Endothelial cell of umbilical vein (primary cell): ENCODE measurements at regions of chr14 and their contacts with region 1.

Region 1: DNA sequence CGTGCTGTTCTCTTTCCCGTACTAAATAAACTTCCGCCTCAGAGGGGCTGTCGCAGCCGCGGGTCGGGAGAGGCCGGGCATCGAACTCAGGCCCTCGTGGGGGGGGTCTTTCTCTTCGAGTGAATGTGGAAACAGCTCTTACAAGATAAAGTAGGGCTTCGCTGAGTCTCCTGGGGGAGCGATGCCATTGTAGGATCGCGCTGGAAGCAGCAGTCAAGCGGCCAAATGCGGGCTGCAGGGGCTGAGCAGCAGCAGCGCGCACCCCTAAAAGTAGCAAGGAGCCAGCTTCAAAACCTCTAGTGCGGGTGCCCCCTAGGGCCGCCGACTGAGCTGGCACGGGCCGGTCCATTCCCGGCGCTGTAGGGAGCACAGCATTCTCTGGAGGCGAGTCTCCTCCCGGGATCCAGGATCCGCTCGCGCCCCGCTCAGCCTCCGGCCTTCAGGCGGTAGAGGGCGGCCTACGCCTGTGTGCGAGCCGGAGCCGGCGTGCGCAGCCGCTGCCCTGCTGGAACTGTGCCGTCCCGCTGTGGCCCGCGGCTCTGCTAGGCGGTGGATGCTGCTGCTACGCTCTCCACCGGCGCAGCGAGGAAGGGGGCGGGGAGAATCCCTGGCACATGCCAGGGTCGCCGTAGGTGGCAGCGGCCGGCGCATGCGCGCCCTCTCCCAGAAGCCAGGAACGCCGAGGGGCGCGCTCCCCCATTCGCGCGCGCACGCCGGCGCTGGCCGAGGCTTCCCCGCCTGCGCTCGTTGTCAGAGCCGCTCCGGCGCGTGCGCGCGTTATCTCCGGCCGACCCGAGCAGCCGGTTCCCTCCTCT is at the start of gene FUT8:
- DNase-seq: peak; percentile 98
- H3K4me3 ChIP-seq: peak within 1 kb of the TSS; percentile 76 to 96 (median 85)
- H3K27ac ChIP-seq: peak within 1 kb of the TSS; percentile 61
- H3K4me1 ChIP-seq: peaks cover 18% of the 10 kb centered on the region
- H3K27me3 ChIP-seq: no peaks in the 10 kb centered on the region
- CTCF ChIP-seq: peak; percentile 60 to 80
- POLR2A ChIP-seq: peak; percentile 86
- total RNA-seq, gene FUT8: 27.7 and 38.8 TPM in 2 replicates

Region 2: DNA sequence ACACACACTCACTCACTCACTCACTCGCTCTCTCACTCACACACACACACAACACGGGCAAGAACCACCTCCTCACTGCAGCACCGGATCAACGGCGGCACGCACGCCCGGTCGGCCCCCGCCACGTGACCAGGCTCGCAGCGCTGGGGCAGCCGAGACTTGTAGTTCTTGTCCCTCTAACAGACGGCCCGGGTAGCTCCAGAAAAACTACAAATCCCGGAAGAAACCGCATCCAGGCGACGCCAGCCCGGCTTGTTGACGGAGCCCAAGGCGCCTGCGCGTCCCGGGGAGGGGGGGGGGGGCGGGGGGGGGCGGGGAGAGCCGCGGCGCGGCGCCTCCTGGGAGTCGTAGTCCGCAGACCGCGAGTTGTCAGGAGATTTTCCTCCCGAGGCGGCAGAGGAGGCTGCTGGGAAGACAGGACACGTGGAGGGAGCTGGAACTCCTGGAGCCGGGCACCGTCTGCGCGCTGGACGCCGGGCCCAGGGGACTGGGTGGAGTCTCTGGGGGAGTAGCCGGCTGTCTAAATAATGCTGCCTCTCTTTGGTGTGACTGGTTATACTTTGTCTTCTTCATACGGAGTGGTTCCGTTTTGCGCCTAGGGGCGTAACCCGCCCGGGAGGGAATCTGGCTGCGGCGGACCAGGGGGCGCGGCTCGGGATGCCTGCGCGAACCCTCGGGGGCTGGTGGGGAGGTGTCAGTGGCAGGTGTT is 309.6 kb before region 1 on chr14 and contains the start of gene MAX:
- CTCF ChIA-PET with region 1: interaction called, 5 read pairs
- POLR2A ChIA-PET with region 1: no interaction called
- dilution Hi-C with region 1: no loop called
- intact Hi-C with region 1: loop called (anchors 1 kb)
- DNase-seq: peak; percentile 99
- H3K4me3 ChIP-seq: peak within 1 kb of the TSS; percentile 87 to 93 (median 91)
- H3K27ac ChIP-seq: peak within 1 kb of the TSS; percentile 74
- H3K4me1 ChIP-seq: peaks cover 35% of the 10 kb centered on the region
- H3K27me3 ChIP-seq: no peaks in the 10 kb centered on the region
- CTCF ChIP-seq: no peak
- POLR2A ChIP-seq: peak; percentile 65
- total RNA-seq, gene MAX: 79.5 and 84.6 TPM in 2 replicates

Region 3: DNA sequence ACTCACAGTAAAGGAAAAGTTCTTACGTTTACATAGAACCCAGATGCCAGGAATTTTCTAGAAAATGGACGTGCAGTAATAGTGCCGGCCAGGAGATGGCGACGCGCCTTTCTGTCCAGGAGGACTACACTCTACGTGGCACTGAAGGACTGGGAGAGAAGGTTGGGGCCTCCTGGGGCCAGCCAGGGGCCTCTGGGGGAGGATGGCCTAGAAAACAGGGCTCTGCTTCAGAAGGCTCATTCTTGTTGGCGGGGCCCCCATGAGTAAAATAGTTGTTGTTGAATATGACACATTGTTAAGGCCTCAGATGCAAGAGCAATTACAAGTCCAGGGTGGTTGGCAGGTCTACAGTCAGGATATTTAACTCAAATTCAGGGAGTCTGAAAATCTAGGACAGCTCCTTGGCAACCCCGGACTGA is 189.8 kb before region 1 on chr14:
- CTCF ChIA-PET with region 1: interaction called, 35 read pairs
- POLR2A ChIA-PET with region 1: no interaction called
- dilution Hi-C with region 1: no loop called
- intact Hi-C with region 1: loop called (anchors 1 kb)
- DNase-seq: peak; percentile 80
- H3K4me3 ChIP-seq: no peak overlapping the region
- H3K27ac ChIP-seq: no peak overlapping the region
- H3K4me1 ChIP-seq: peaks cover 4% of the 10 kb centered on the region
- H3K27me3 ChIP-seq: no peaks in the 10 kb centered on the region
- CTCF ChIP-seq: peak; percentile 82
- POLR2A ChIP-seq: no peak

Region 4: GRCh38 chr14:65449647-65450046 is 37.4 kb after region 1 on chr14:
- CTCF ChIA-PET with region 1: interaction called, 10 read pairs
- POLR2A ChIA-PET with region 1: no interaction called
- dilution Hi-C with region 1: no loop called
- intact Hi-C with region 1: no loop called
- DNase-seq: no peak
- H3K4me3 ChIP-seq: no peak overlapping the region
- H3K27ac ChIP-seq: no peak overlapping the region
- H3K4me1 ChIP-seq: peaks cover 8% of the 10 kb centered on the region
- H3K27me3 ChIP-seq: no peaks in the 10 kb centered on the region
- CTCF ChIP-seq: no peak
- POLR2A ChIP-seq: no peak

Region 5: DNA sequence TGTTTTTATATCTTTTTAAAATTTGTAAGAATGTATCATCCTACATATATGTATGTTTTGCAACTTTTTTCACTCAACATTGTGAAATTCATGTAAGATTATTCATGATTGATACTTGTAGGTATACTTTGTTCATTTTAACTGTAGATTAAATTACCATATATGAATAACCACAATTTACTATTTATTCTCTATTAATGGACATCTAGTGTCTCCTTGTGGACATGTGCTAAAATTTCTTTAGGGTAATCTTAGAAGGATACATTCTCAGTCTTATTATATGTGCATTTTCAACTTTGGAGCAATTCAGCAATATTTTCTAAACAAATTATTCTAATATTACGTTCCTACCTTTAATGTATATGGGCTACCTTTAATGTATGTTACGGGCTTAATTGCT is 192.7 kb after region 1 on chr14:
- CTCF ChIA-PET with region 1: interaction called, 21 read pairs
- POLR2A ChIA-PET with region 1: no interaction called
- dilution Hi-C with region 1: no loop called
- intact Hi-C with region 1: loop called (anchors 1 kb)
- DNase-seq: peak; percentile 15
- H3K4me3 ChIP-seq: no peak overlapping the region
- H3K27ac ChIP-seq: no peak overlapping the region
- H3K4me1 ChIP-seq: no peaks in the 10 kb centered on the region
- H3K27me3 ChIP-seq: no peaks in the 10 kb centered on the region
- CTCF ChIP-seq: no peak
- POLR2A ChIP-seq: no peak

Region 6: DNA sequence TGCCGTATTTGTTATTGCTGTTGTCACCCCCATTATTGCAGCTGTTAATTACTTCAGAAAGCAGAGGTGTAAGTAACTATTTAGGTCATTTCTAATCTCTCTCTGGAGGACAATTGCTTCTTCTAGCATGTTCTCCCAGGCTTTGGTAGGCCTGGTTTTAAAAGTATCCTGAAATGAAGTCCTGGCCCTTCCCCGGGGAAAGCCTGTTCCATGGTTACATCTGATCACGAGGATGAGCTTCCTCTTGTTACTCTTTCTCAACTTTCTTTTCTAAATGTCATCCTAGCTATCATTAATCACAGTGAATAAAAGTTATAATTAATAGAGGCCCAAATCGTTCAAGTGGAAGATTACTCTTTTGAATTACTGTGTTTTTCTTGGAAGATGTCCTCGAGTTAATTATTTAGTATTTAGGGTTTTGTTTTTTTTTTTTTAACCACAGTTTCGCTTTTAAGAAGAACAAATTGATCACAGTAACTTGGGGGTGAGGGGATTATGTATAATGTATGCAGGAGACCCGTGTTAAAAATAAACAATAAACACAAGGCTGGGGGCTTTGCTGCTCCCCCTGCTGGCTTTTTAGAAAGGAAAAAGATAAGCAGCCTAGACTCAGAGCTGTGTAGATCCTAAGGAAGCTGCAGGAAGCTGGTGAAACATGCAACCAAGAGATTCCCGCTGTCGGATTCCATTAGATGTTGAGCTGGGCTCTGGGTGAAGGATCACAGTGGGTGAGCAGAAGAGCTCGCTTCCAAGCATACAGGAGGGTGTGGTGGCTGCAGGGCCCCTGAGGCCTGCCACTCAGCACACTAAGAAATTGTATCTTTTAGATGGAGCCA is 420.4 kb after region 1 on chr14:
- CTCF ChIA-PET with region 1: interaction called, 926 read pairs
- POLR2A ChIA-PET with region 1: no interaction called
- dilution Hi-C with region 1: no loop called
- intact Hi-C with region 1: loop called (anchors 1 kb)
- DNase-seq: peak; percentile 27
- H3K4me3 ChIP-seq: no peak overlapping the region
- H3K27ac ChIP-seq: no peak overlapping the region
- H3K4me1 ChIP-seq: no peaks in the 10 kb centered on the region
- H3K27me3 ChIP-seq: peaks cover 0 to 5% of the 10 kb centered on the region in 2 experiments
- CTCF ChIP-seq: peak in 1 of 2 donors; percentile 38
- POLR2A ChIP-seq: no peak